Endothelial cell of umbilical vein (primary cell): ENCODE measurements at regions of chr9 and their contacts with region 1.

Region 1: DNA sequence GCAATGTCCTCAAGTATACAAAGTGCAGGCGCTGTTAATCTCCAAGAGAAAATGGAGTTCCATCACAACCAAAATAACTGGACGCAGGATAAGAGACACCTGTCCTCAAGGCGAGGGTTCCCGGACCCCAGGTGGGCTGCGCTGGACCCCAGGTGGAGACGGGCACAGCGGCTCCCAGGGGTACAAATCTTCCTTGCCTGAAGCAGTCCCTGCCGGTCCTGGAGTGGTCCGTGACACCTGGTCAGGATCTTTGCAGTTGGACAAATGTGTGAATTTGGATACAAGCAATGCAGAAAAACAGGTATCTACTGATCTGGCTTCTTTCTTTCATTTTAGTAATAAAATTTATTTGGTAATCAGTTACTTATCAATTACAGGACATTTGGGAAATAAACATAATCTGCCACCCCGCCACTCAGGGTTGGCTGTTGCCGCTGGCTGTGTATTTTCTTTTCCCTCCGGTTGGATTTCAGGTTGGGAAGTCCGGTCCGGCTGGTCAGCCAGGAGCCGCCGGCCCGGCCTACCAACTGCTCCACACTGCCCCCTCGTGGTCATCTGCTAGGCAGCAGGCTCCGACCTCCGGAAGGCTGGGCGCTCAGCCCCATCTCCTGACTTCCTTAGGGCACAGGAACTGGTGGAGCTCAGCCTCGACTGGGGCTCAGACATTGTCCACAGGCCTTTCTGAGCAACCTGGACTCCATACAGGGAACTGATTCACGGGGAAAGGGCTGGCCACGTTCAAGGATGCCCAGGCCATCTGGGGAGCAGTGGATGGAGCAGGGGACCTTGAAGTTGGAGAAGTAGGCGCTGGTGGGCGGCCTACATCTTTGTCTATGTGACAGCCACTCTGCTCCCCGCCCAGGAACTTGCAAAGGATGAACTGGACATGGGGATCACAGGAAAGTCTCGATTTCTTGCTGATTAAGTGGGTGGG is 43.4 kb downstream of the NXNL2 start:
- DNase-seq: peak; percentile 69
- H3K4me3 ChIP-seq: no peak overlapping the region
- H3K27ac ChIP-seq: no peak overlapping the region
- H3K4me1 ChIP-seq: peaks cover under 1% of the 10 kb centered on the region
- H3K27me3 ChIP-seq: no peaks in the 10 kb centered on the region
- CTCF ChIP-seq: peak; percentile 94 to 96
- POLR2A ChIP-seq: no peak

Region 2: DNA sequence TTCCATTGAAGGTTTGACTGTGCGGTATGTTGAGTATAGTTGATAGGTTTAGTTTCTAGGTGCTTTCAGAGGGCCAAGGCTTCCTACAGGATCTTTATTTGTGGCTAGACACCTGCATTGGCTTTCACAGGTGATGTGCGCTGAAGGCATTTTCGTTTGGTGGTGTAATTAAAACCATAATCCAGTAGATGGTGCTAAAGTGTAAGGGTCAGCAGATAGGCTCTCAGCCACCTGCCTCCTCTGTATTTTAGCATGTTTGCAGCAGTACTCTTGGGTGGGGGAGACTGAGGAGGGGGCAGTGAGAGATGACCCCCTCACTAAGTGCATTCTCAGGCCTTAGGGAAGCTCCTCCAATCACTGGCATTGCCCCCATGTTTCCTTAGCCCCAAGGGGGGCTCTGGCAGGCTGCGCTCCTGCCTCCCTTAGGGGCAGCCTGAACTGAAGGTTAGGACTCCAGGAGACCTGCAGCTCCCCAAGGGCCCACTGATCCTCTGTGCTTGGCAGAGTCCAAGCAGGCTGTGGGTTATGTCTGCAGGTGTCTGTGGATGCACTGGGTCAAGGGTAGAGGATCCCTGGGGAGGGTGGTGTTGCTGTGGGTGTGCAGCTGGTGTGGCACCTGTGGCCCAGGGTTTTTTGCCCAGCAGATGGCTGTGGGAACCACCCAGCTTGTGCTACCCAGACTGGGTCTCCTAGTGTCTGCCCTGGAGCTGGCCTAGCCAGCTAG is 627.5 kb before region 1 on chr9:
- CTCF ChIA-PET with region 1: interaction called, 19 read pairs
- POLR2A ChIA-PET with region 1: no interaction called
- dilution Hi-C with region 1: no loop called
- intact Hi-C with region 1: loop called (anchors 1 kb)
- DNase-seq: peak; percentile 32
- H3K4me3 ChIP-seq: no peak overlapping the region
- H3K27ac ChIP-seq: no peak overlapping the region
- H3K4me1 ChIP-seq: no peaks in the 10 kb centered on the region
- H3K27me3 ChIP-seq: peaks cover 0 to 2% of the 10 kb centered on the region in 2 experiments
- CTCF ChIP-seq: peak; percentile 31 to 50
- POLR2A ChIP-seq: no peak

Region 3: DNA sequence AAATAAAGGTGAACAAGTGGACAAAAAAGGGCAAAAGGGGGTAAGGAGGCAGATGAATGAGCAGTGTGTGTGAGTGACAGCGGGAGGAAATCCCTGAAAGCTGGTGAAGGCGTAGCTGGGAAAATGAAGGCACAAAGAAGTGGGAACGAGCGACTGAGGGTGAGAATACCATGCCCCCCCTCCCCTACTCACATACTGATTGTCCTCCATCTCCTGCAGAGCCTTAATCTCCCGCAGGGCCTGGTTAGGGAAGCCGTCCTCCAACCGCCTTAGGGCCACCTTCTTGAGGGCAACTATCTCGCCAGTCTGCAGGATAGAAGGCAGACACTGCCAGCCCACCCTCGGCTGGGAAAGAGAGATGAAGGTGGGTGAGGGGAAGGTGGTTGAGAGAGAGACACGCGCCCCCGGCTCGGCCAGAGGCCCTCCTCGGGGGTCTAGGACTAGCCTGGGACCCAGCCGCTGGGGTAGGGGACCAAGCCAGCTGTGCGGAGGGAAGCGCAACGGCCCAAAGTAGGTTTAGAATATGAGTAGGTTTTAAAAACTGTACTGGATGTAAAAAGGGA is 604.6 kb before region 1 on chr9:
- CTCF ChIA-PET with region 1: no interaction called
- POLR2A ChIA-PET with region 1: no interaction called
- dilution Hi-C with region 1: no loop called
- intact Hi-C with region 1: loop called (anchors 5 kb)
- DNase-seq: no peak
- H3K4me3 ChIP-seq: peak overlapping the region; percentile 41 to 50 (median 48)
- H3K27ac ChIP-seq: no peak overlapping the region
- H3K4me1 ChIP-seq: peaks cover 3% of the 10 kb centered on the region
- H3K27me3 ChIP-seq: no peaks in the 10 kb centered on the region
- CTCF ChIP-seq: no peak
- POLR2A ChIP-seq: no peak

Region 4: DNA sequence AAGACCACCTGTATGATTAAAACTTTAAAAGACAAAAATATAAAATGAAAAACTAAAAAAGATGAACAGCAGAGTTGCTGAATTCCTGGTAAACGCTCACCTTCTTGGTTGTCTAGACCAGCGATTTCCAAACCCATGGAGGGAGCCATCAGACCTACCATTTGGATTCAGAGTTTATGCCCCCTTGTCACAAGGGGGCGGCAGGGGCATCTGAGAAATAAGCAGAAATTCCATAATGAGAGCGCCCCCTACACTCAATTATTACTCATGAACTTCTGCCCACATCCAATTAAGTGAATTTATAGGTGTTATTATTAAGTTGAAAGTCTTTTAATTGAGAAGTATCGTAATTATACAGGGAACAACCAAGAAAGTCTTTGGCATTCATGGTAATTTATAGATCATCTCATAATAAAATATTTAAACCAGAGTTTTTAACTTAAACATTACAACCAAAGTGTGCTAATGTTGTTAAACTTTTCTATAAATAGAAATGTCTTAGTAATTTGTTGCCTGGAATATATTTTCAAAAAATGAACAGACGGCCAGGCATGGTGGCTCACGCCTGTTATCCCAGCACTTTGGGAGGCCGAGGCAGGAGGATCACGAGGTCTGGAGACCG is 404.9 kb before region 1 on chr9:
- CTCF ChIA-PET with region 1: interaction called, 7 read pairs
- POLR2A ChIA-PET with region 1: no interaction called
- dilution Hi-C with region 1: no loop called
- intact Hi-C with region 1: loop called (anchors 1 kb)
- DNase-seq: peak; percentile 74
- H3K4me3 ChIP-seq: no peak overlapping the region
- H3K27ac ChIP-seq: no peak overlapping the region
- H3K4me1 ChIP-seq: no peaks in the 10 kb centered on the region
- H3K27me3 ChIP-seq: no peaks in the 10 kb centered on the region
- CTCF ChIP-seq: peak; percentile 79 to 84
- POLR2A ChIP-seq: no peak

Region 5: DNA sequence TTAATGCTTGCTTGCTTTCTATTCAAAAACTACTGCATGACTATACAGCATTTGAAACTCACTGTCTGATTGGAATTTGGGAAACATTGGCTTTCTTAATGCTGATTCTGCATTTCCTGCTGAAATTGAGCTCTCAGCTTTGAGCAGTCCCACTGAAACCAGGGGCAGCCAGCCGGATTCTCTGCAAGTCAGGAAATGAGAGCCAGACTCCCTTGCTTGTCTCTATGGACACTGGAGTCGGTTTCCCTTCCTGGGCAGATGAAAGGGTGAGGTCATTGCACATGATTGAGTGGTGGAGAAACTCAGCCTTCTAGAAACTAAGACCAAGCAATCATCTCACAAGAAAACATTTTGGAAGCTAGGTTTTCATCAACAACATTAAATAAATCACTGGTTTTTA is 320.4 kb before region 1 on chr9:
- CTCF ChIA-PET with region 1: no interaction called
- POLR2A ChIA-PET with region 1: no interaction called
- dilution Hi-C with region 1: no loop called
- intact Hi-C with region 1: loop called (anchors 5 kb)
- DNase-seq: peak; percentile 64
- H3K4me3 ChIP-seq: peak overlapping the region in 1 of 3 experiments; percentile 32
- H3K27ac ChIP-seq: peak overlapping the region; percentile 5
- H3K4me1 ChIP-seq: peaks cover 5% of the 10 kb centered on the region
- H3K27me3 ChIP-seq: no peaks in the 10 kb centered on the region
- CTCF ChIP-seq: no peak
- POLR2A ChIP-seq: no peak

Region 6: GRCh38 chr9:88534456-88535261 is 43.7 kb before region 1 on chr9 and contains the start of gene NXNL2:
- CTCF ChIA-PET with region 1: interaction called, 5 read pairs
- POLR2A ChIA-PET with region 1: no interaction called
- dilution Hi-C with region 1: no loop called
- intact Hi-C with region 1: loop called (anchors 5 kb)
- DNase-seq: peak; percentile 61
- H3K4me3 ChIP-seq: peak within 1 kb of the TSS; percentile 13 to 49 (median 14)
- H3K27ac ChIP-seq: no peak within 1 kb of the TSS
- H3K4me1 ChIP-seq: peaks cover 5% of the 10 kb centered on the region
- H3K27me3 ChIP-seq: peaks cover 16 to 23% of the 10 kb centered on the region in 2 experiments
- CTCF ChIP-seq: no peak
- POLR2A ChIP-seq: no peak
- total RNA-seq, gene NXNL2: not detected in 2 replicates